ENCODE measurements at regions of chr2 and their contacts with region 1.

Region 1: GRCh38 chr2:151238527-151239487 is 22.9 kb downstream of the RBM43 start:
- DNase-seq: peak; percentile 57
- ATAC-seq: peak; percentile 91
- H3K4me3 ChIP-seq: no peak overlapping the region
- H3K27ac ChIP-seq: no peak overlapping the region
- H3K4me1 ChIP-seq: no peaks in the 10 kb centered on the region
- H3K27me3 ChIP-seq: 0 out of 5 replicates have a peak, but pooled peaks cover 0 to 6% of the 10 kb centered on the region in 2 experiments
- CTCF ChIP-seq: peak; percentile 82
- EP300 ChIP-seq: no peak
- POLR2A ChIP-seq: no peak
- RAD21 ChIP-seq: peak; percentile 83

Region 2: GRCh38 chr2:150487537-150488429 is 751.0 kb before region 1 on chr2 and contains the start of gene RND3:
- CTCF ChIA-PET with region 1: no interaction called
- POLR2A ChIA-PET with region 1: no interaction called
- in situ Hi-C with region 1: no loop called
- intact Hi-C with region 1: loop called (anchors 5 kb)
- DNase-seq: peak; percentile 87
- ATAC-seq: peak; percentile 85
- H3K4me3 ChIP-seq: peak within 1 kb of the TSS; percentile 40 to 56 (median 43); a peak in 4 of 6 replicates
- H3K27ac ChIP-seq: no peak within 1 kb of the TSS
- H3K4me1 ChIP-seq: peaks cover 21% of the 10 kb centered on the region
- H3K27me3 ChIP-seq: peaks cover 6 to 31% of the 10 kb centered on the region in 2 experiments; a peak in 4 of 5 replicates
- CTCF ChIP-seq: peak; percentile 93
- EP300 ChIP-seq: no peak
- POLR2A ChIP-seq: no peak
- RAD21 ChIP-seq: peak; percentile 80
- total RNA-seq, gene RND3: 0.13 and 0.73 TPM in 2 replicates

Region 3: GRCh38 chr2:150585221-150585971 is 653.4 kb before region 1 on chr2:
- CTCF ChIA-PET with region 1: no interaction called
- POLR2A ChIA-PET with region 1: no interaction called
- in situ Hi-C with region 1: no loop called
- intact Hi-C with region 1: no loop called
- DNase-seq: no peak
- ATAC-seq: no peak
- H3K4me3 ChIP-seq: no peak overlapping the region
- H3K27ac ChIP-seq: no peak overlapping the region
- H3K4me1 ChIP-seq: no peaks in the 10 kb centered on the region
- H3K27me3 ChIP-seq: no peaks in the 10 kb centered on the region; a peak in 1 of 5 replicates
- CTCF ChIP-seq: no peak
- EP300 ChIP-seq: no peak
- POLR2A ChIP-seq: no peak
- RAD21 ChIP-seq: no peak

Region 4: DNA sequence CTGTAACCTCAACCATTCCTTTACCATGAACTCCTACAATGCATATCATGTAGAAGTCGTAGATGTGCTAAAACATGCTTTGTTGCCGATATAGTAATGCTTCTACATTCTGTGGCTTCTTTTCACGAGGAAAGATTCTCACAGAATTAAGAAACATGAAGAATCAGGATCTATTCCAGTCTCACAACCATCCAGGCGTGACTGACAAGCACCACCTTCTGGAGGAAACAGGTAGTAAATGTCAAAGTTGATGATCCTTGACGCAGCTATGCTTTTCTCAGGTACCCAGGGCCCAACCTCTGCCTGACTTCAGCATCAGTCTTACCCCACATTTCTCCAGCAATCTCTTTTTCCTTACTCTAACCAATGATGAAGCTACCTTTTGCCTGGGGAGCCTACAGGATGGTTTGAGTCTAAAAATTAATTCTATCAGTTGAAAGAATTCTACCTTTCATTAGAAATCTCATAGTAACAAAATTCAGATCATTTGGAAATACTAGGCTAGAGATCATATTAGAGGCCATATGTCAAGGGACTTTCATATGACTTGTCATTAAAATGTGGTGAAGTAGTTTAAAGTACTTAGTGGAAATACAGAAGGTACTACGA is 628.0 kb before region 1 on chr2:
- CTCF ChIA-PET with region 1: no interaction called
- POLR2A ChIA-PET with region 1: no interaction called
- in situ Hi-C with region 1: no loop called
- intact Hi-C with region 1: loop called (anchors 2 kb)
- DNase-seq: peak; percentile 19
- ATAC-seq: peak; percentile 90
- H3K4me3 ChIP-seq: no peak overlapping the region
- H3K27ac ChIP-seq: no peak overlapping the region
- H3K4me1 ChIP-seq: no peaks in the 10 kb centered on the region
- H3K27me3 ChIP-seq: no peaks in the 10 kb centered on the region
- CTCF ChIP-seq: peak; percentile 71
- EP300 ChIP-seq: no peak
- POLR2A ChIP-seq: no peak
- RAD21 ChIP-seq: no peak

Region 5: GRCh38 chr2:151032741-151033191 is 206.0 kb before region 1 on chr2:
- CTCF ChIA-PET with region 1: no interaction called
- POLR2A ChIA-PET with region 1: no interaction called
- in situ Hi-C with region 1: no loop called
- intact Hi-C with region 1: loop called (anchors 5 kb)
- DNase-seq: no peak
- ATAC-seq: no peak
- H3K4me3 ChIP-seq: no peak overlapping the region
- H3K27ac ChIP-seq: no peak overlapping the region
- H3K4me1 ChIP-seq: no peaks in the 10 kb centered on the region
- H3K27me3 ChIP-seq: no peaks in the 10 kb centered on the region
- CTCF ChIP-seq: no peak
- EP300 ChIP-seq: no peak
- POLR2A ChIP-seq: no peak
- RAD21 ChIP-seq: no peak

Region 6: GRCh38 chr2:151289369-151290088 is 50.7 kb after region 1 on chr2 and contains the start of gene NMI:
- CTCF ChIA-PET with region 1: no interaction called
- POLR2A ChIA-PET with region 1: no interaction called
- in situ Hi-C with region 1: no loop called
- intact Hi-C with region 1: no loop called
- DNase-seq: peak; percentile 33
- ATAC-seq: peak; percentile 96
- H3K4me3 ChIP-seq: peak within 1 kb of the TSS; percentile 61 to 99 (median 80)
- H3K27ac ChIP-seq: no peak within 1 kb of the TSS
- H3K4me1 ChIP-seq: peaks cover 9% of the 10 kb centered on the region; the same call in 1 of the 2 replicates
- H3K27me3 ChIP-seq: peaks cover 0 to 12% of the 10 kb centered on the region in 2 experiments; a peak in 2 of 5 replicates
- CTCF ChIP-seq: peak; percentile 58
- EP300 ChIP-seq: no peak
- POLR2A ChIP-seq: peak; percentile 23 to 38; a peak in 1 of 4 replicates
- RAD21 ChIP-seq: 0 out of 2 replicates have a peak, but pooled peaks have one; percentile 25
- total RNA-seq, gene NMI: 3.9 and 4.4 TPM in 2 replicates

Region 7: DNA sequence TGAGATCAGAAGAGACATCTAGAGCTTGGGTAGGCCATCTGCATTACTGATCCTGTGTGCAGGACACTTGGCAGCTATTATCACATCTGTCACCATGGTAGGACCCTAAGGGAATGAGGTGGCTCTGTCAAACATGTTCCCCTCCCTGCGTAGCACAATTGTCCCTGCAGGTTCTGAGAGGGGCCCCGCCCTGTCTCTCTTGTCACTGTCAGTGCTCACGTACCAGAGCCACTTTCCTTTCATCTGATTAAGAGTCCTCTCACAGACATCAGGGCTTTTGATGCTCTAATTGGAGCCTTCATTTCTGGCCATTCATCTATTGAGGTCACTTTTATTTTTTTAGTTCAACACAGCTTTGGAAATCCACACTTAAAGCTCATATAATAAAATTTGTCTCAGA is 457.0 kb after region 1 on chr2:
- CTCF ChIA-PET with region 1: no interaction called
- POLR2A ChIA-PET with region 1: no interaction called
- in situ Hi-C with region 1: no loop called
- intact Hi-C with region 1: no loop called
- DNase-seq: no peak
- ATAC-seq: no peak
- H3K4me3 ChIP-seq: no peak overlapping the region
- H3K27ac ChIP-seq: no peak overlapping the region
- H3K4me1 ChIP-seq: no peaks in the 10 kb centered on the region
- H3K27me3 ChIP-seq: 0 out of 5 replicates have a peak, but pooled peaks cover 0 to 11% of the 10 kb centered on the region in 2 experiments
- CTCF ChIP-seq: no peak
- EP300 ChIP-seq: no peak
- POLR2A ChIP-seq: no peak
- RAD21 ChIP-seq: no peak